Head of caudate nucleus (tissue), 42 donors: ENCODE measurements at regions of chr17 and their contacts with region 1.

Region 1: GRCh38 chr17:81977211-81978027 is at the start of gene ASPSCR1:
- DNase-seq: peak; percentile 65 to 96 (median 91)

Region 2: DNA sequence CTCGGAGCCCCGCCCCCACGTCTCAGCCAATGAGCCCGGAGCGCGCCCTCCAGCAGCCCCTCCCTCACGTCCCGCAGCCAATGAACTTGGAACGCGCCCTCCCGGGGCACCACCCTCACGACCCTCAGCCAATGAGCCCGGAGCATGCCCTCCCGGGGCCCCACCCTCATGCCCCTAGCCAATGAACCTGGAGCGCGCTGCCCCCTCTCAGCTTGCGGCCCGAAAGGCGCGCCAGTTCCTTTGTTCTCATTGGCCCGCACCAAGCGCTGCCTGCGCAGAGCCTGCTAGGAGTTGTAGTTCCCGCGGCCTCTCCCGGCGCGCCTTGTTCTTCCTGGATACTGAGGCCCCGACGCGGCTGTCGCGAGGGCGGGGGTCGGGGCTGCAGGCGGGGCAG is 45.6 kb after region 1 on chr17 and contains the start of gene LRRC45:
- intact Hi-C with region 1: loop called (anchors 5 kb)
- DNase-seq: peak; percentile 99 to 100 (median 100)